CD8-positive, alpha-beta T cell (primary cell): ENCODE measurements at regions of chr6 and their contacts with region 1.

Region 1: GRCh38 chr6:148464319-148465010 is 121.8 kb downstream of the SASH1 start:
- DNase-seq: peak in 8 of 9 experiments; percentile 12 to 59 (median 46)
- ATAC-seq: no peak
- H3K4me3 ChIP-seq: no peak overlapping the region
- H3K4me3 Mint-ChIP-seq: no peak overlapping the region
- H3K27ac ChIP-seq: no peak overlapping the region
- H3K27ac Mint-ChIP-seq: no peak overlapping the region
- H3K4me1 ChIP-seq: no peaks in the 10 kb centered on the region
- H3K4me1 Mint-ChIP-seq: peaks cover 3% of the 10 kb centered on the region
- H3K27me3 ChIP-seq: no peaks in the 10 kb centered on the region
- H3K27me3 Mint-ChIP-seq: peaks cover 10% of the 10 kb centered on the region
- CTCF ChIP-seq: peak; percentile 97

Region 2: GRCh38 chr6:146857180-146857979 is 1607.1 kb before region 1 on chr6:
- CTCF ChIA-PET with region 1: interaction called, 4 read pairs
- POLR2A ChIA-PET with region 1: no interaction called
- intact Hi-C with region 1: loop called in 1 of 2 experiments (anchors 1 kb)
- DNase-seq: peak; percentile 34 to 86 (median 68)
- ATAC-seq: peak; percentile 88
- H3K4me3 ChIP-seq: peak overlapping the region; percentile 10 to 32
- H3K4me3 Mint-ChIP-seq: peak overlapping the region; percentile 24
- H3K27ac ChIP-seq: no peak overlapping the region
- H3K27ac Mint-ChIP-seq: no peak overlapping the region
- H3K4me1 ChIP-seq: no peaks in the 10 kb centered on the region
- H3K4me1 Mint-ChIP-seq: peaks cover 2% of the 10 kb centered on the region
- H3K27me3 ChIP-seq: no peaks in the 10 kb centered on the region
- H3K27me3 Mint-ChIP-seq: peaks cover 2% of the 10 kb centered on the region
- CTCF ChIP-seq: peak; percentile 94

Region 3: GRCh38 chr6:147390909-147391536 is 1073.4 kb before region 1 on chr6:
- CTCF ChIA-PET with region 1: no interaction called
- POLR2A ChIA-PET with region 1: no interaction called
- intact Hi-C with region 1: loop called in 1 of 2 experiments (anchors 5 kb)
- DNase-seq: no peak
- ATAC-seq: no peak
- H3K4me3 ChIP-seq: no peak overlapping the region
- H3K4me3 Mint-ChIP-seq: no peak overlapping the region
- H3K27ac ChIP-seq: no peak overlapping the region
- H3K27ac Mint-ChIP-seq: no peak overlapping the region
- H3K4me1 ChIP-seq: no peaks in the 10 kb centered on the region
- H3K4me1 Mint-ChIP-seq: peaks cover 4% of the 10 kb centered on the region
- H3K27me3 ChIP-seq: no peaks in the 10 kb centered on the region
- H3K27me3 Mint-ChIP-seq: no peaks in the 10 kb centered on the region
- CTCF ChIP-seq: no peak

Region 4: GRCh38 chr6:148144917-148145521 is 319.4 kb before region 1 on chr6:
- CTCF ChIA-PET with region 1: interaction called, 3 read pairs
- POLR2A ChIA-PET with region 1: no interaction called
- intact Hi-C with region 1: loop called (anchors 2 to 10 kb)
- DNase-seq: peak; percentile 5 to 56 (median 51)
- ATAC-seq: no peak
- H3K4me3 ChIP-seq: no peak overlapping the region
- H3K4me3 Mint-ChIP-seq: no peak overlapping the region
- H3K27ac ChIP-seq: no peak overlapping the region
- H3K27ac Mint-ChIP-seq: no peak overlapping the region
- H3K4me1 ChIP-seq: no peaks in the 10 kb centered on the region
- H3K4me1 Mint-ChIP-seq: peaks cover 7% of the 10 kb centered on the region
- H3K27me3 ChIP-seq: no peaks in the 10 kb centered on the region
- H3K27me3 Mint-ChIP-seq: peaks cover 2% of the 10 kb centered on the region
- CTCF ChIP-seq: peak; percentile 61

Region 5: GRCh38 chr6:148177589-148178233 is 286.8 kb before region 1 on chr6:
- CTCF ChIA-PET with region 1: interaction called, 6 read pairs
- POLR2A ChIA-PET with region 1: no interaction called
- intact Hi-C with region 1: loop called in 1 of 2 experiments (anchors 5 kb)
- DNase-seq: peak in 3 of 9 experiments; percentile 23 to 32 (median 28)
- ATAC-seq: no peak
- H3K4me3 ChIP-seq: no peak overlapping the region
- H3K4me3 Mint-ChIP-seq: no peak overlapping the region
- H3K27ac ChIP-seq: no peak overlapping the region
- H3K27ac Mint-ChIP-seq: no peak overlapping the region
- H3K4me1 ChIP-seq: no peaks in the 10 kb centered on the region
- H3K4me1 Mint-ChIP-seq: no peaks in the 10 kb centered on the region
- H3K27me3 ChIP-seq: no peaks in the 10 kb centered on the region
- H3K27me3 Mint-ChIP-seq: peaks cover 14% of the 10 kb centered on the region
- CTCF ChIP-seq: peak; percentile 49

Region 6: DNA sequence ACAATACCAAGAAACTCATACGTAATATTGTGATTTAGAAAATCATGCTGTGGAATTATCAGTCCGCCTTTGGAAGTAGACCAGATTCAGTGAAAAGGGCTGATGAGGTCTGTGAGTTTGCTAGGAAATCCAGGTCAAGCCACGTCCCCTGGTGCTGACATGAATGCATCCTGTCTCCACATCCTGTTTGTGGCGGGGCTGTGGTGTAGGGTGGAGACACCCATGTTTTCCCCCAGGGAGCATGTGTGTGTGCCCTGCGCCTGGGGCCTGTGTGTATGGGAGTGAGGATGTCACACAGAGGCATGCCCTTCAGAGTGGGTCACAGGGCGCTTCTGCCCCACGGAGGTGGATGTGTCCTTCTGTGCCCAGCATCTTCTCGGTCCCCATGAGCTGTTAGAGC is 12.8 kb before region 1 on chr6:
- CTCF ChIA-PET with region 1: interaction called, 16 read pairs
- POLR2A ChIA-PET with region 1: no interaction called
- intact Hi-C with region 1: no loop called
- DNase-seq: peak in 2 of 9 experiments; percentile 17 to 22
- ATAC-seq: no peak
- H3K4me3 ChIP-seq: no peak overlapping the region
- H3K4me3 Mint-ChIP-seq: no peak overlapping the region
- H3K27ac ChIP-seq: no peak overlapping the region
- H3K27ac Mint-ChIP-seq: no peak overlapping the region
- H3K4me1 ChIP-seq: no peaks in the 10 kb centered on the region
- H3K4me1 Mint-ChIP-seq: peaks cover 8% of the 10 kb centered on the region
- H3K27me3 ChIP-seq: peaks cover 0 to 2% of the 10 kb centered on the region in 2 experiments
- H3K27me3 Mint-ChIP-seq: peaks cover 22% of the 10 kb centered on the region
- CTCF ChIP-seq: no peak